Natural killer cell (primary cell): ENCODE measurements at regions of chr19 and their contacts with region 1.

Region 1: DNA sequence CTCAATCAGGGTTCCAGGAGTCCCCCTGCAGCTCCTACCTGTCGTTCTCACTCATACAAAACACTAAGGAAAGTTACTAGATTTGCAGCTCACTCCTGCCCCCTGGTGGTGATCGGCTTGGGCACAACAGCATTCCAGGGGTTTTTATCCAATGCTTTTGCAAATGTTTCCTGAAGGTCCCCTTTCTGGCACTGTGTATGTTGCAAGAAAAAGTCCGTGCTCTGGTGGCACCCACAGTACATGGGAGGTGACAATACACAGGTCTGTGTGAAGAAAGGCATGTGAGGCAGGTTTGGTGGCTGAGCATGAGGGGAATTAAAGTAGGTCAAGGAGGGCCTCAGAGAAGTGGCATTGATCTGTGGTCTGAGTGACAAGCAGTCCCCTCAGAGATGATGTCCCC is 8.6 kb upstream of the TYK2 start:
- DNase-seq: peak; percentile 82 to 91
- ATAC-seq: peak; percentile 55 to 68 (median 61)
- H3K4me3 ChIP-seq: no peak overlapping the region
- H3K4me3 Mint-ChIP-seq: no peak overlapping the region
- H3K27ac ChIP-seq: no peak overlapping the region
- H3K27ac Mint-ChIP-seq: peak overlapping the region in 1 of 2 donors; percentile 54
- H3K4me1 ChIP-seq: peaks cover 6% of the 10 kb centered on the region
- H3K4me1 Mint-ChIP-seq: peaks cover 4 to 10% of the 10 kb centered on the region in 2 donors
- H3K27me3 ChIP-seq: no peaks in the 10 kb centered on the region
- H3K27me3 Mint-ChIP-seq: no peaks in the 10 kb centered on the region
- CTCF ChIP-seq: peak; percentile 93

Region 2: DNA sequence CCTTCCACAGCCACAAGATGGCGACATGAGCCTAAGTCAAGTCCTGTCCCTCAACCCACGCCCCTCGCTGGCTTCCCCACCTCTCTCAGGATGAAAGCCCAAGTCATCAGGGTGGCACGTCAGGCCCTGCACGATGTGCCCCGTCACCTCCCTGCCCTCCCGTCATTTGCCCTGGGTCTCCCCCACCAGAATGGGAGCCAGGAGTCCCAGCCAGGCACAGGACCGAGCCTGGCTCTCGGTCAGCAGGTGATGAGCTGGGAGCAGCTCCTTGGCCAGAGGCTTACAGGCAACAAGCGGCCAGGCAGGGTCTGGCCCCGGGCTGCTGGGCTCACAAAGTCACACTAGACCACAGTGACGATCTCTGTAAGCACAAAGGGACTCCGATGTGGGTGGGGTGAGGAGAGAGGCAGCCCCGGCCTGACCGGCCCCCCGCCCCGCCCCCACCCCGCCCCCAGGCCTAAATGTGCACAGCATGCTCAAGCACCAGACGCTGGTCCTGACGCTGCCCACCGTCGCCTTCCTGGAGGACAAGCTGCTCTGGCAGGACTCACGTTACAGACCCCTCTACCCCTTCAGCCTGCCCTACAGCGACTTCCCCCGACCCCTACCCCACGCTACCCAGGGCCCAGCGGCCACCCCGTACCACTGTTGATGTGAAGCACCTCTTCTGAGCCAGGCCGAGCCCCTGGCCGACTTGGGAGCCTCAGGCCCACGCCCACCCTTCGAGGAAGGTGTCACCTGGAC is 129.6 kb before region 1 on chr19:
- intact Hi-C with region 1: loop called (anchors 1 kb)
- DNase-seq: peak; percentile 73 to 95
- ATAC-seq: peak; percentile 81 to 96 (median 90)
- H3K4me3 ChIP-seq: no peak overlapping the region
- H3K4me3 Mint-ChIP-seq: no peak overlapping the region
- H3K27ac ChIP-seq: no peak overlapping the region
- H3K27ac Mint-ChIP-seq: no peak overlapping the region
- H3K4me1 ChIP-seq: peaks cover 3% of the 10 kb centered on the region
- H3K4me1 Mint-ChIP-seq: peaks cover 0 to 7% of the 10 kb centered on the region in 2 donors
- H3K27me3 ChIP-seq: no peaks in the 10 kb centered on the region
- H3K27me3 Mint-ChIP-seq: no peaks in the 10 kb centered on the region
- CTCF ChIP-seq: peak; percentile 71